GM10248 (cell line): ENCODE measurements at regions of chr5 and their contacts with region 1.

Region 1: DNA sequence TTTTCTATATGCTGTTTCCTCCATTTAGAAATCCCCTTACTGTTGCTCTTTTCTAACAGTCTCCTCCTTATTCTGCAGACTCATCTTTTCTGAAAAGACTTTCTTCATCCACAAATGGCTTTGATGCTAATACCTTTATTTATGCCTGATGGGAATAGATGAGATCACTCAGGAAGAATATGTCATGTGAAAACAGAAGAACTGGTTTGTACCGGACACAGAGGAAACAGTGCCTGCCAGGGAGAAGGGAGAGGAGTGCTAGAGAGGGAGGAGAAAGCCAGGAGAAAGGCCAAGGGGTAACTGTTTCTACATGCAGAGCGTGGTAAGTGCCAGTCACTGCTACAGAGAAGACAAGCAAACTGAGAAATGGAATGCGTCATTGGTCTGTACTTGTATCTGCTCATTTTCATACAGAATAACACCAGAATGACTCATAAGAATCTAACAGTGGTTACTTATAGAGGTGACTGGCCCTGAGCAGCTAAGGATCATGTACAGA is 45.9 kb upstream of the PJA2 start:
- DNase-seq: peak; percentile 66
- CTCF ChIP-seq: no peak

Region 2: GRCh38 chr5:109416882-109417281 is 38.8 kb before region 1 on chr5:
- CTCF ChIA-PET with region 1: no interaction called
- POLR2A ChIA-PET with region 1: no interaction called
- DNase-seq: no peak
- CTCF ChIP-seq: no peak

Region 3: DNA sequence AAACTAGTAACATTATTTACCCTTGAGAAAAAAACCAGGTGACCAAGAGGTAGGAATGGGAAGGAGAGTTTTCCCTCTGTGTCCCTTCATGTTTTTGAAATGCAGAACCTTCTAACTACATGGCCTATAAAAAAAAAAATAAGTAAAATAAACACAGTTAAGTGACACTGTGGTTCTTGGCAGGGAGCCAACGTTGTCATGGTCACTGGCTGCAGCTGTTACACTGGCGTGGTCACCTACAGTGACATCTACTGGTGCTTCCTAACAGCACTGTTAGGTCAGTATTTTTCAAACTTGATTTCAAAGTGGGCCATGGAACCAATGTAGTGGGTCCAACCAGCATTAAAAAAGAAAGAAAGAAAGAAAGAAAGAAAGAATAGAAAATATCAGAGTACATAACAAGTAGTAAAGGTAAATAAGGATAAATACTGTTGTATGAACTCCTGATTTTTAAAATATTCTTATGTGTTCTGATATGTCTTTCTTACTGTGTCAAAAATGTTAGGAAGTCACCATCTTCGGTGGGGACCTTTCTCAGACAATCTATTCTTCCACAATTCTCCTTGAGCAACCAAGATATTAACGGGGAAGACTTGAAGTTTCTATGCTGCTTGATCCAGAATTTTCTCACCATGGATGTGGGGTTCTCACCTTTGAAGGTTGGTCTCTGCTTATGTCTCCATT is 13.2 kb after region 1 on chr5:
- CTCF ChIA-PET with region 1: interaction called, 24 read pairs
- POLR2A ChIA-PET with region 1: no interaction called
- DNase-seq: peak; percentile 73
- CTCF ChIP-seq: peak; percentile 83